Caco-2 (cell line): ENCODE measurements at regions of chr2 and their contacts with region 1.

Region 1: GRCh38 chr2:156589381-156590079 is 153.4 kb downstream of the GPD2 start:
- DNase-seq: peak in 1 of 2 experiments; percentile 33
- H3K4me3 ChIP-seq: no peak overlapping the region
- H3K4me3 Mint-ChIP-seq: no peak overlapping the region
- H3K27ac Mint-ChIP-seq: no peak overlapping the region
- H3K4me1 ChIP-seq: peaks cover 13% of the 10 kb centered on the region; the same call in 1 of the 2 replicates
- H3K4me1 Mint-ChIP-seq: peaks cover 13% of the 10 kb centered on the region
- H3K27me3 ChIP-seq: no peaks in the 10 kb centered on the region
- H3K27me3 Mint-ChIP-seq: no peaks in the 10 kb centered on the region
- CTCF ChIP-seq: peak; percentile 49 to 51

Region 2: DNA sequence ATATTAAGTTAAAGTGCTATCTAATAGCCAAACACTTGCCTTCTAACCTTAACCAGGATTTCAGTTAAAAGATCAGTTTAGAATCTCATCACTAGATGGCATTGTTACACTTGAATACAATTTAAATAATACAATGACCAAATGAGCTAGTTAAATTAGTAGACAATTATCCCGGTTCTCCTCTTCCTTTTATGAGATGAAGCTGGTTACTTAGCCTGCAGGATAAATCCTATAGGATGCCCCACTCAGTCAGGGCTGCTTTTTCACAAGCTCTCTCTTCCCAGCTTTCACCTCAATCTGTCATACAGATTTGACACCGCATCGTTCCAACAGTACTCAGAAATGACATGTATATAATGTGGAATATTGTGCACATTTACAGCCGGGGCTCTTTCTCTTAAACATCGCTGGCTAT is 1212.3 kb before region 1 on chr2:
- CTCF ChIA-PET with region 1: no interaction called
- POLR2A ChIA-PET with region 1: no interaction called
- intact Hi-C with region 1: loop called (anchors 5 kb)
- DNase-seq: no peak
- H3K4me3 ChIP-seq: no peak overlapping the region
- H3K4me3 Mint-ChIP-seq: no peak overlapping the region
- H3K27ac Mint-ChIP-seq: no peak overlapping the region
- H3K4me1 ChIP-seq: no peaks in the 10 kb centered on the region
- H3K4me1 Mint-ChIP-seq: no peaks in the 10 kb centered on the region
- H3K27me3 ChIP-seq: no peaks in the 10 kb centered on the region
- H3K27me3 Mint-ChIP-seq: no peaks in the 10 kb centered on the region
- CTCF ChIP-seq: peak; percentile 6 to 27

Region 3: GRCh38 chr2:156156580-156156979 is 432.9 kb before region 1 on chr2:
- CTCF ChIA-PET with region 1: no interaction called
- POLR2A ChIA-PET with region 1: no interaction called
- intact Hi-C with region 1: loop called (anchors 5 kb)
- DNase-seq: no peak
- H3K4me3 ChIP-seq: no peak overlapping the region
- H3K4me3 Mint-ChIP-seq: no peak overlapping the region
- H3K27ac Mint-ChIP-seq: no peak overlapping the region
- H3K4me1 ChIP-seq: no peaks in the 10 kb centered on the region
- H3K4me1 Mint-ChIP-seq: peaks cover 8% of the 10 kb centered on the region
- H3K27me3 ChIP-seq: no peaks in the 10 kb centered on the region
- H3K27me3 Mint-ChIP-seq: no peaks in the 10 kb centered on the region
- CTCF ChIP-seq: peak in 1 of 2 experiments; percentile 25

Region 4: GRCh38 chr2:156400706-156401678 is 188.5 kb before region 1 on chr2:
- CTCF ChIA-PET with region 1: interaction called, 4 read pairs
- POLR2A ChIA-PET with region 1: no interaction called
- intact Hi-C with region 1: loop called (anchors 1 kb)
- DNase-seq: peak; percentile 63 to 82
- H3K4me3 ChIP-seq: peak overlapping the region; percentile 74
- H3K4me3 Mint-ChIP-seq: peak overlapping the region; percentile 88
- H3K27ac Mint-ChIP-seq: peak overlapping the region; percentile 97
- H3K4me1 ChIP-seq: peaks cover 16% of the 10 kb centered on the region; the same call in 1 of the 2 replicates
- H3K4me1 Mint-ChIP-seq: peaks cover 48% of the 10 kb centered on the region
- H3K27me3 ChIP-seq: no peaks in the 10 kb centered on the region
- H3K27me3 Mint-ChIP-seq: peaks cover 8% of the 10 kb centered on the region
- CTCF ChIP-seq: no peak

Region 5: GRCh38 chr2:156756516-156756915 is 167.0 kb after region 1 on chr2:
- CTCF ChIA-PET with region 1: no interaction called
- POLR2A ChIA-PET with region 1: no interaction called
- intact Hi-C with region 1: no loop called
- DNase-seq: no peak
- H3K4me3 ChIP-seq: no peak overlapping the region
- H3K4me3 Mint-ChIP-seq: no peak overlapping the region
- H3K27ac Mint-ChIP-seq: no peak overlapping the region
- H3K4me1 ChIP-seq: no peaks in the 10 kb centered on the region
- H3K4me1 Mint-ChIP-seq: peaks cover 10% of the 10 kb centered on the region
- H3K27me3 ChIP-seq: no peaks in the 10 kb centered on the region
- H3K27me3 Mint-ChIP-seq: no peaks in the 10 kb centered on the region
- CTCF ChIP-seq: no peak

Region 6: GRCh38 chr2:156784020-156784701 is 194.6 kb after region 1 on chr2:
- CTCF ChIA-PET with region 1: no interaction called
- POLR2A ChIA-PET with region 1: no interaction called
- intact Hi-C with region 1: loop called (anchors 2 kb)
- DNase-seq: no peak
- H3K4me3 ChIP-seq: no peak overlapping the region
- H3K4me3 Mint-ChIP-seq: no peak overlapping the region
- H3K27ac Mint-ChIP-seq: no peak overlapping the region
- H3K4me1 ChIP-seq: peaks cover 12% of the 10 kb centered on the region
- H3K4me1 Mint-ChIP-seq: peaks cover 25% of the 10 kb centered on the region
- H3K27me3 ChIP-seq: no peaks in the 10 kb centered on the region
- H3K27me3 Mint-ChIP-seq: no peaks in the 10 kb centered on the region
- CTCF ChIP-seq: no peak

Region 7: DNA sequence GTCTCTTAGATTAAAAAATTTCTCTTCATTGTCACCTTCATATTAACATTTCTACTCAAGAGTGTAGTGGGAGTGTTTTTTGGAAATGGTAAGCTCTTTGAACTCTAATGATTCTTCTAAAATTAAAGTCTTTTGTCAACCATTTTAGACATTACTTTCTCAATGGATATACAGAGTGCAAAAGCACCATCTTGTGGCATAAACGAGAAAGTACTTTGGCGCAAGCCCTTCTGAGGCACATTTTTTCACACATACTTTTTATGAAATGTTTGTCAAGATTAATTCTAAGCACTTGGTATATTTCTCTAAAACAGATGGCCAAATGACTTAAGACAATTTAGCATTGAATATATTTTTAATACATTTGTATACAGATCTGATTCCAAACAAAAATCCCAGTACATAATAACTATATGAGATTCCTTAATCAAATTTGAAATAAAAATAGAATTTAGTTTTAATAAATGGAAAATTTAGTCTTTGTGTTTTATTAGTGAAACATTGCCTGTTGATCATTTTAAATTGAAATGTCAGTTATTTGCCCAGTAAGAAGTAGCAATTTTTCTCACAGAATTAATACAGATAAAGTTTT is 604.7 kb after region 1 on chr2:
- CTCF ChIA-PET with region 1: no interaction called
- POLR2A ChIA-PET with region 1: no interaction called
- intact Hi-C with region 1: loop called (anchors 5 kb)
- DNase-seq: peak in 1 of 2 experiments; percentile 43
- H3K4me3 ChIP-seq: no peak overlapping the region
- H3K4me3 Mint-ChIP-seq: no peak overlapping the region
- H3K27ac Mint-ChIP-seq: no peak overlapping the region
- H3K4me1 ChIP-seq: no peaks in the 10 kb centered on the region
- H3K4me1 Mint-ChIP-seq: no peaks in the 10 kb centered on the region
- H3K27me3 ChIP-seq: no peaks in the 10 kb centered on the region
- H3K27me3 Mint-ChIP-seq: peaks cover 5% of the 10 kb centered on the region
- CTCF ChIP-seq: peak; percentile 61 to 63